ENCODE measurements at regions of chr3 and their contacts with region 1.

Region 1: DNA sequence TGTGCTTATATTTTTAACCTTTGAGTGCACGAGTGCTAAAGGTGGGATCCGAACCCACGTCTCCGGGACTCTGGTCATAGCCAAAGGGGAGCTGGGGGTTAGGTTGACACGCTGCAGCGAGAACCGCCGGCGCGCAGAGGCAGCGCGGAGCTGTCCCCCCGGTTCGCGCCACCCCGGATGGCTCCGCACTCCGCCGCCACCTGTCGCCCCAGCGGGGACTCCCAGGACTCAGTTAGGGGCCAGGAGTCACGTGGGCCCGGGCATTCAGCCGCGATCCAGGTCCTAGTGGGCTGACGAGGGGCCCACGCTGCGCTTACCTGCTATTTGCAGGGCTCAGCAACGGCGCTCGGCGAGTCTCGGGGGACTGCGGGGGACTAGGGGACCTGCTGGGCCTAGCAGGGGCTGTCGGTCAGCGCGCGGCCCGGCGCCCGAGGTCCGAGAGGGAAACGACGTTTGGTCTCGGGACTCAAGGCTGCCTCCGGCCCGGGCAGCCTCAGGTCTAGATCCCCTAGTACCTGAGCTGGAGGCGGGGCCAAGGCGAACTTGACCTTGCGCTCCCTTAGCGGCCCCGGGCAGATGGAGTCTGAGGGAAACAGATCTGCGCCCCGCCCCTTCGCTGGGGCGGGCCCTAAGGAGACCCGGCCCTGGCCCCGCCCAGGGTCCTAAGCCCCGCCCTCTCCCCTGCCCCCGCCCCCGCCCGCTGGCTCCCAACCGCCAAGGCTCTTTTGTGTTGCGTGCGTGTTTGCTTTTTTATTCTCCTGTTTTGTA is at the start of gene NMNAT3:
- DNase-seq: peak; percentile 86 to 92 (median 89)
- H3K4me3 ChIP-seq: peak within 1 kb of the TSS; percentile 84
- H3K27ac ChIP-seq: peak within 1 kb of the TSS; percentile 7 to 51
- H3K4me1 ChIP-seq: peaks cover 2% of the 10 kb centered on the region
- H3K27me3 ChIP-seq: no peaks in the 10 kb centered on the region
- CTCF ChIP-seq: no peak
- EP300 ChIP-seq: no peak
- POLR2A ChIP-seq: no peak
- total RNA-seq, gene NMNAT3: 19.0 to 31.2 (median 23.6) TPM

Region 2: DNA sequence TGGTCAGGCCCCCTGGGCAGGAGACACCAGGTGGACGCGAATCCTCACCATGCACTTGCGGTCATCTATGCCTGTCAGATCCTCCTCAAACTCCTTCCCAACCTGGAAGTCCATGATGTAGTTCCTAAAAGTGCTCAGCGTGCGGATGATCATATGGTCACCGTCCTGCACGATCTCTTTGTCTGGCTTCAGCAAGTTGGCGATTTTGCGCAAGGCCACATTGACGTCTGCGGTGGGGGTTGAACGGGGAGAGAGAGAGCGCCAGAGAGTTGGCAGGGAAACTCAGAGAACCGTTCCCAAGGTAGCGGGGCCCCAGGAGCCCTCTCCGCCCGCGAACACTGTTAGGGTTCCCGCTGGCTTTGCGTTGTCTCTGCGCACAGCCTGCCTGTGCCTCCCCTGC is 138.8 kb before region 1 on chr3:
- intact Hi-C with region 1: no loop called
- DNase-seq: peak; percentile 77 to 86 (median 81)
- H3K4me3 ChIP-seq: peak overlapping the region; percentile 76
- H3K27ac ChIP-seq: peak overlapping the region; percentile 77 to 97
- H3K4me1 ChIP-seq: peaks cover 50% of the 10 kb centered on the region
- H3K27me3 ChIP-seq: no peaks in the 10 kb centered on the region
- CTCF ChIP-seq: no peak
- EP300 ChIP-seq: no peak
- POLR2A ChIP-seq: peak; percentile 22

Region 3: GRCh38 chr3:141094790-141095545 is 1417.4 kb after region 1 on chr3:
- intact Hi-C with region 1: loop called in 1 of 4 experiments (anchors 5 kb)
- DNase-seq: peak in 4 of 5 donors; percentile 51 to 74 (median 66)
- H3K4me3 ChIP-seq: no peak overlapping the region
- H3K27ac ChIP-seq: no peak overlapping the region
- H3K4me1 ChIP-seq: peaks cover 2% of the 10 kb centered on the region
- H3K27me3 ChIP-seq: no peaks in the 10 kb centered on the region
- CTCF ChIP-seq: no peak
- EP300 ChIP-seq: no peak
- POLR2A ChIP-seq: no peak